Dendritic cell treated with granulocyte-macrophage colony-stimulating factor and Interleukin-4, amounts not matched to agents 40 ng/mL and 50 ng/mL, for 4 days (primary cell): ENCODE measurements at regions of chr3 and their contacts with region 1.

Region 1: DNA sequence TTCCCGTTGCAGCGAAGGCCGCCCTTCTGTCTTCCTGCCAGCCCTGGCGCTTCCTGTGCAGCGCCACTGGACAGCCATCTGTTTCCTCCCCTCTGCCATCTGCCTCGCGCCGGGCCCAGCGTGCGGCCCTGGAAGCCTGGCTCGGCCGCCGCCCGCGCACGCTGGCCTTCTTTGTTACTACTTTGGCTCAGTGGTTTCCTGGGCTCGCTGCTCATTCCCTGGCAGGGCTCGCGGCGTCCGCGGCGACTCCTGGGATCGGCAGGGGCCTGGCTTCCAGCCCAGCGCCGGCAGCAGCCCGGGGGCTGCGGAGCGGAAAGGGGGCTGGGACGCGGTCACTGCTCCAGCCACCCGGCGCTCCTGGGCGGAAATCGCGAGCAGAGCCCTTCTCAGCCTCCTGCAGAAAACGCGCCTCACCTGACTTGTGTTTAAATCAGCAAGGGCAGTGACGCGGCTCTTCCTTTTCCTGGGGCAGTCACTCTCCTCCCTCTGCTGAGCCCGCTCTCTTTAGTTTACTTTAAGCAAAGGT is 10.0 kb downstream of the CMTM7 start:
- H3K4me3 Mint-ChIP-seq: peak overlapping the region; percentile 73
- H3K27ac Mint-ChIP-seq: peak overlapping the region; percentile 95
- H3K4me1 Mint-ChIP-seq: peaks cover 88% of the 10 kb centered on the region
- H3K27me3 Mint-ChIP-seq: no peaks in the 10 kb centered on the region

Region 2: DNA sequence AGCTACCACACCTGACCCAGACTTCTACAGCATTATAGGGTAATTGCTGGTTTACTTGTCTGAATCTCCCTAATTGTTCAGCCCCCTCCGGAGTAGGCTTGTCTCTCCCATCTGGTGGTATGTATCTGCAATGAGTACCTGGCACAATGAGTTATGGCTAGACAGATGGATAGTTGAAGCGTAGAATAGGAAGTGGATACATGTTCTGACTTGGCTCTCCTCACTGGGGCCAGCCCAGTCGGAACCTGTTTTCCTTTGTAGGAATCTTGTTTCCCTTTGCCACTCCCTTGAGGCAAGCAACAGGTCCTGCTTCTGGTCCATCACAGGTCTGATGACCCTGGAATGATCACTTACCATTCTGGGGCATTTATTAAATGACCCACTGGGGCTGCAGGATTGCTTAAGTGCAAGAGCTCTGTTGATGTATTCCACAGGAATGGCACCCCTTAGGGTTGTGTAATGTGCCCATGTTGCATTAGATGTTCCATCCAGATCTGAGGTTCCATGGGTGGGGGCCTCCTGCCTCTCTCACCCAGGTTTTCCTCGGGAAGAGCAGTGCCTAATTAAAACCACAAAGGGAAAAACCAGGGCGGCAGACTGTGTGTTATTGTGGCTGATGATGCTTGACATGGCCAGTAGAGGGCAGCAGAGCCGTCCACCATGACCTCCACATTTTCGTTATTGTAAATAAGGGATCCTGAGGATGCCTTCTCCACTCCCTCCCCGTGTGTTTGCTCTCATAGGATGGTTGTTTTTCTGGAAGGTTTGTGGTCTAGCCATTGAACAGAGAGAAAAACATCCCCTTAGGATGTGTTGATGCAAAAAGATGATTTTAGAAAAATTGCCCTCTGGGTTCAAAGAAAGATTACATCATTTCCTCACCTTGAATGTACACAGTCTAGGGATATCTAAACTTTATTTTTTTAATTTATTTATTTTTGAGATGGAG is 105.1 kb before region 1 on chr3:
- intact Hi-C with region 1: loop called (anchors 5 kb)
- H3K4me3 Mint-ChIP-seq: no peak overlapping the region
- H3K27ac Mint-ChIP-seq: no peak overlapping the region
- H3K4me1 Mint-ChIP-seq: peaks cover 5% of the 10 kb centered on the region
- H3K27me3 Mint-ChIP-seq: no peaks in the 10 kb centered on the region

Region 3: GRCh38 chr3:32593903-32594525 is 192.4 kb after region 1 on chr3:
- intact Hi-C with region 1: no loop called
- H3K4me3 Mint-ChIP-seq: no peak overlapping the region
- H3K27ac Mint-ChIP-seq: no peak overlapping the region
- H3K4me1 Mint-ChIP-seq: peaks cover 7% of the 10 kb centered on the region
- H3K27me3 Mint-ChIP-seq: peaks cover 5% of the 10 kb centered on the region